ENCODE measurements at regions of chr1 and their contacts with region 1.

Region 1: GRCh38 chr1:31789259-31790065 is 25.3 kb upstream of the ADGRB2 start:
- DNase-seq: peak; percentile 91
- H3K4me3 Mint-ChIP-seq: peak overlapping the region; percentile 89
- H3K27ac Mint-ChIP-seq: no peak overlapping the region
- H3K4me1 Mint-ChIP-seq: peaks cover 16% of the 10 kb centered on the region
- H3K27me3 Mint-ChIP-seq: peaks cover 4% of the 10 kb centered on the region

Region 2: DNA sequence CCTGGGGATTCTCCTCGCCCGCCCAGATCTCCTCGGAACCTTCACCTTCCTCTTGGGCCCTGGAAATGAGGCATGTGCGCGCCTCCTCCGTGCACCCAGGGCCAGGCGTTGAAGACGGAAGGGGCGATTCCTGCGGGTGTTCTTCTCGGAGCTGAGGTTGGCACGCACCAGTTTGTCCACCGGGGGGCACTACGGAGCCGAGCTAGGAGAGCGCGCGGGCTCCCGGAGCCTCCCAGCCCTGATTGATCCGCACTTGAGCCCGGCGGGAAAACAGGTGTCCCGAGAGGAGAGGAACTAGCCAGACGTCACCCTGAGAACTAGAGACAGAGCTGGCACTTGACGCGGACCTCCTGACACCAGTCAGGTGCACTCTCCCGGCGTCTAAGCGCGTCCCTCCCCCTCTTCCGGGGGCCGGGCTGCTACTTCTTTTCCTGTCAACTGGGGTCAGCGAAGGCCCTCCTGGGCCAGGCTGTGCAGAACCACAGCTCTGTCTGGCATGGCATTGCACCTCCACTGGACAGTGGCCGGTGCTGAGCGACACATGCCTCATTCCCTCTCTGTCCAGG is 394.8 kb before region 1 on chr1:
- intact Hi-C with region 1: loop called (anchors 2 kb)
- DNase-seq: peak; percentile 61
- H3K4me3 Mint-ChIP-seq: peak overlapping the region; percentile 80
- H3K27ac Mint-ChIP-seq: no peak overlapping the region
- H3K4me1 Mint-ChIP-seq: peaks cover 10% of the 10 kb centered on the region
- H3K27me3 Mint-ChIP-seq: peaks cover 11% of the 10 kb centered on the region

Region 3: GRCh38 chr1:31644560-31645273 is 144.7 kb before region 1 on chr1 and contains the start of gene PEF1:
- intact Hi-C with region 1: loop called (anchors 1 kb)
- DNase-seq: peak; percentile 98
- H3K4me3 Mint-ChIP-seq: peak within 1 kb of the TSS; percentile 96
- H3K27ac Mint-ChIP-seq: peak within 1 kb of the TSS; percentile 100
- H3K4me1 Mint-ChIP-seq: peaks cover 21% of the 10 kb centered on the region
- H3K27me3 Mint-ChIP-seq: peaks cover 2% of the 10 kb centered on the region
- total RNA-seq, gene PEF1: 57.6 and 66.1 TPM in 2 replicates

Region 4: GRCh38 chr1:31705080-31705866 is 84.2 kb before region 1 on chr1:
- intact Hi-C with region 1: loop called (anchors 2 kb)
- DNase-seq: peak; percentile 76
- H3K4me3 Mint-ChIP-seq: peak overlapping the region; percentile 66
- H3K27ac Mint-ChIP-seq: peak overlapping the region; percentile 64
- H3K4me1 Mint-ChIP-seq: peaks cover 54% of the 10 kb centered on the region
- H3K27me3 Mint-ChIP-seq: peaks cover 37% of the 10 kb centered on the region

Region 5: DNA sequence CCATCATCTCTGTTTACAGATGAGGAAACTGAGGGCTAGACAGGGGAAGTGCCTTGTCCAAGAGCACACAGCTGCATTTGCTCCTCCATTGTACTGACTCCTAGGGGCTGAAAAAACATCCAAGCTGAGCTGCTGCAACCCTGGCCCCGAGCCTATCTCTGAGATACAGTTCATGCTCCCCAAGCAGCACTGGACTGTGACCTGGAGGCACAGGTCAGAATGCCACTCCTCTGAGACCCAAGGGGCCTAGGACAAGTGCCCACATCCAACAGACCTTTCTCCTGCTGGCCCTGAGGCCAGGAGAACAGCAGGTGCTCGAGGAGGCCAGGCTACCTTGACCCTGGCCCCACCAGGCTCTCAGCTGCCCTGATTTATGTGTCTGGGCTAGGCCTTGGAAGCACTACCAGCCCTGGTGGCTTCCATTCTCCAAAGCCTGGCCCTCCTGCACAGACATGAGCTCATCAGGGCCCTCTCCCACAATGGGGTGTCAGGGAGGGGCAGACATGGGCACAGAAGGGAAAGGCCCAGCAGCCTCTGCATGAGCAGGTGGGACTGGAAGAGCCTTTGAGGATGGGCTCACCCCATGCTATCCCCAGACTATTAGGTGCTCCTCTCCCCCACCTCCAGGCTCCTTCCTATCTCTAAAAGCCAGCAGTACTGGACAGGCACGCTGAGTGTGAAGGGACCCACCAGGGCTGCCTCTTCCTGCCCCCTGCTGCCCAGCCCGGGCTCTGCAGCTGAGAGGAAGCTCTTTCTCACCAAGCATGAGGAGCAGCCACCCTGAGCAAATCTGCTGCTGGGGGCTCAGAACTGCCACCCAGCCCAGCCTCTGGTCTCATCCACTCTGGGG is 44.1 kb before region 1 on chr1:
- intact Hi-C with region 1: loop called (anchors 1 kb)
- DNase-seq: peak; percentile 40
- H3K4me3 Mint-ChIP-seq: no peak overlapping the region
- H3K27ac Mint-ChIP-seq: no peak overlapping the region
- H3K4me1 Mint-ChIP-seq: peaks cover 9% of the 10 kb centered on the region
- H3K27me3 Mint-ChIP-seq: peaks cover 11% of the 10 kb centered on the region